WTC11 (cell line): ENCODE measurements at regions of chr10 and their contacts with region 1.

Region 1: GRCh38 chr10:1368842-1369171 is 312.6 kb downstream of the WDR37 start:
- DNase-seq: peak; percentile 73
- ATAC-seq: peak; percentile 96
- H3K4me3 Mint-ChIP-seq: no peak overlapping the region
- H3K27ac Mint-ChIP-seq: no peak overlapping the region
- H3K4me1 Mint-ChIP-seq: peaks cover 19% of the 10 kb centered on the region
- H3K27me3 Mint-ChIP-seq: no peaks in the 10 kb centered on the region
- CTCF ChIP-seq: peak; percentile 65

Region 2: DNA sequence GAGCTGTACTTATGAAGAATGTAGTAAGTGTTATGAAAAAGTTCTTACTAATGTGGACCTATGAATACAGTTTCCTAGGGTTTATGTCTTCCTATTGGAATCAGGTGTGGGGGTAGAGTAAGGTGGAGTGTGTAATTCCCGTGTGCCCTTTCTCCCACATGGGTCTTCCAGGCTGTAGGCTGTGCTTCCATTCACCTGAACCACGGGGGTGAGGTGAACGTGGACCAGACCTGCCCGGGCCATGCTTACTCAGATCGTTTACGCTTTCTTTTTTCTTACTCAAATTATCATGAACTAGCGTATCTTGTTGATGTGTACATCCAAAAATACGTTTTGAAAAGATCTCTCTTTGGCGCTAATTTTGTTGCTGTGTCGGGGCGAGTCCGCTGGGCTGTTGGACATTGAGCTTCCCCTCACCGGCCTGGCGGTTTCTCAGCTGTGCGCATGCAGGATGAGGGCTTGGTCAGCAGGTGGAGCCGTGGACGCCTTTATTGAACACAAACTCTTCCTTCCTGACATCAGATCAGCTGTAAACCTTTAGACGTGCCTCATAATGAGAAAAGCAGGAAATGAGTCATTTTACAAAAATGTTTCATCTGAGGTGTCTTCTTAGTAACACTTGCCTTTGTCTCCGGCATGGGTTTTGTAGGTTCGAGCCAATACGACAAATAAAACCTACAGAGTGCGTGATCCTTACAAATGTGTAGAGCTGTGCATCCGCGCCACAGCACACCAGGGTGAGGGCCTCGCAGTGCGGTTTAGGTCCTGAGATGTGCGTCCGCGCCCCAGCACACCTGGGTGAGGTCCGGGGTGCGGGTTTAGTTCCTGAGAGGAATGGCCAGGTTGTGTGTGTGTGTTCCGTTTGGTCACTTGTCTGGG is 258.8 kb before region 1 on chr10:
- CTCF ChIA-PET with region 1: interaction called, 36 read pairs
- POLR2A ChIA-PET with region 1: no interaction called
- DNase-seq: peak; percentile 83
- ATAC-seq: peak; percentile 92
- H3K4me3 Mint-ChIP-seq: no peak overlapping the region
- H3K27ac Mint-ChIP-seq: peak overlapping the region; percentile 4
- H3K4me1 Mint-ChIP-seq: peaks cover 31% of the 10 kb centered on the region
- H3K27me3 Mint-ChIP-seq: no peaks in the 10 kb centered on the region
- CTCF ChIP-seq: peak; percentile 51

Region 3: DNA sequence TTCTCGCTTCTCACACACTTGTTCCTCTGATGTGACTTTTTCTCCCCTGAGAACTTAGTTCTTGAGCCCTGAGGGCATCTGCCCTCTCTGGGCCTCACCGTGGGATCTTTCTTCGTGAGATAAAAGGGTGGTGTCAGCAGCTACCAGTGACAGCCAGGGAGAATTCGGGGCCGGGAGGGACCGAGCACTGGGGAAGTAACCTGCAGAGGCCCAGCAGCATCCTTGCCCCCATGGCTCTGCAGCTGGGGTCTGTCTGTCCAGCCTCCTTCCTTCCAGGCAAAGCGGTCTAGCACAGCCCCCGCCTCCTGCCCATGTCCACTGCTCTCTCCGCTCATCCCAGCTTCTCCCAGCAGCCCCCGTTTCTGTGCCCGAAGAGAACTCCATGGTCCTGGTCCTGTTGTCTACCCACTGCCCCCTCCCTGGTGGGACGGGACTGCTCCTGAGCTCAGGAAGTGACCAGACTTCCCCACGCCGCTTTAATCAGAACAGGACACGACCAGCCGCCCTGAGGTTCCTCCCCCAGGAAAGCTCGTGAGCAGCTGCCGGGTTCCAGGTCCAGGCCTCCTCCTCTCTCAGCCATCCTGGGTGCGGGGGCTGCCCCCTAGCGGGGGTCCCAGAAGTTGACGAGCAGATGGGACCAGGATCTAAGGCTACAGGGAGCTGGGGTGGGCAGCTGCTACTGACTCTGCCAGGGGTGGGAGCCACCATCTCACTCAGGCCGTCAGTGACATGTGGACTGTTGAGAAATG is 125.1 kb before region 1 on chr10:
- CTCF ChIA-PET with region 1: interaction called, 23 read pairs
- POLR2A ChIA-PET with region 1: no interaction called
- DNase-seq: peak; percentile 46
- ATAC-seq: peak; percentile 44
- H3K4me3 Mint-ChIP-seq: no peak overlapping the region
- H3K27ac Mint-ChIP-seq: no peak overlapping the region
- H3K4me1 Mint-ChIP-seq: peaks cover 31% of the 10 kb centered on the region
- H3K27me3 Mint-ChIP-seq: 0 out of 2 replicates have a peak, but pooled peaks cover 4% of the 10 kb centered on the region
- CTCF ChIP-seq: 0 out of 2 replicates have a peak, but pooled peaks have one; percentile 29

Region 4: GRCh38 chr10:1310271-1310789 is 58.5 kb before region 1 on chr10:
- CTCF ChIA-PET with region 1: interaction called, 10 read pairs
- POLR2A ChIA-PET with region 1: no interaction called
- DNase-seq: peak; percentile 44
- ATAC-seq: peak; percentile 83
- H3K4me3 Mint-ChIP-seq: peak overlapping the region; percentile 46
- H3K27ac Mint-ChIP-seq: peak overlapping the region; percentile 100
- H3K4me1 Mint-ChIP-seq: peaks cover 61% of the 10 kb centered on the region
- H3K27me3 Mint-ChIP-seq: peaks cover 3% of the 10 kb centered on the region
- CTCF ChIP-seq: no peak

Region 5: GRCh38 chr10:1331560-1331959 is 37.2 kb before region 1 on chr10:
- CTCF ChIA-PET with region 1: interaction called, 12 read pairs
- POLR2A ChIA-PET with region 1: no interaction called
- DNase-seq: no peak
- ATAC-seq: no peak
- H3K4me3 Mint-ChIP-seq: no peak overlapping the region
- H3K27ac Mint-ChIP-seq: no peak overlapping the region
- H3K4me1 Mint-ChIP-seq: peaks cover 10% of the 10 kb centered on the region
- H3K27me3 Mint-ChIP-seq: peaks cover 5% of the 10 kb centered on the region
- CTCF ChIP-seq: no peak

Region 6: GRCh38 chr10:1403508-1404322 is 34.9 kb after region 1 on chr10:
- CTCF ChIA-PET with region 1: interaction called, 16 read pairs
- POLR2A ChIA-PET with region 1: no interaction called
- DNase-seq: peak; percentile 53
- ATAC-seq: peak; percentile 84
- H3K4me3 Mint-ChIP-seq: no peak overlapping the region
- H3K27ac Mint-ChIP-seq: no peak overlapping the region
- H3K4me1 Mint-ChIP-seq: peaks cover 14% of the 10 kb centered on the region
- H3K27me3 Mint-ChIP-seq: no peaks in the 10 kb centered on the region; the same call in 1 of the 2 replicates
- CTCF ChIP-seq: no peak

Region 7: DNA sequence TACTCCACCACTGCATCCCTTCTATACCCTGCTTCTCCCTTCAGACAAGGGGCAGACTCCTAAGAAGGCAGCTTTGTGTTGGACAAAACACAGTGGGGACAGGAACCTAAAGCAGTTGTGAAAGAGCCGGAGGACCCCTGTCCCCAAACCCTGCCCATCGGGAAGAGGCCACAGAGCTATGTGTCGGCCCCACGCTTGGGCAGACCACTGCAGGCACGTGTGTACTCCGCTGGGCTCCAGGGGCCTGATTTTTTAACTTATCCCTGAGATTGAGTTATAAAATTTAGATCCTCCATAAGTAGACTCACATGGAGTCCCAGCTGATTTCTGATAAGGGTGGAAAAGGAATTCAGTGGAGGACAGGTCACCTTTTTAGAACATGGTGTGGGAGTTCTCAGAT is 58.0 kb after region 1 on chr10:
- CTCF ChIA-PET with region 1: no interaction called
- POLR2A ChIA-PET with region 1: no interaction called
- DNase-seq: no peak
- ATAC-seq: no peak
- H3K4me3 Mint-ChIP-seq: no peak overlapping the region
- H3K27ac Mint-ChIP-seq: no peak overlapping the region
- H3K4me1 Mint-ChIP-seq: peaks cover 15% of the 10 kb centered on the region
- H3K27me3 Mint-ChIP-seq: peaks cover 39% of the 10 kb centered on the region
- CTCF ChIP-seq: no peak